ENCODE measurements at regions of chr6 and their contacts with region 1.

Region 1: GRCh38 chr6:109382576-109383437 is 540 bp upstream of the CD164 start:
- DNase-seq: peak; percentile 93 to 96
- H3K4me3 ChIP-seq: peak overlapping the region; percentile 84 to 95
- H3K27ac ChIP-seq: peak overlapping the region; percentile 98 to 100
- H3K4me1 ChIP-seq: peaks cover 0 to 36% (median 16%) of the 10 kb centered on the region in 4 donors
- H3K27me3 ChIP-seq: no peaks in the 10 kb centered on the region
- CTCF ChIP-seq: peak; percentile 43 to 62

Region 2: GRCh38 chr6:109009236-109009961 is 373.4 kb before region 1 on chr6:
- intact Hi-C with region 1: loop called (anchors 5 kb)
- DNase-seq: peak; percentile 96
- H3K4me3 ChIP-seq: peak overlapping the region; percentile 65 to 87
- H3K27ac ChIP-seq: peak overlapping the region; percentile 81 to 86
- H3K4me1 ChIP-seq: peaks cover 0 to 48% (median 19%) of the 10 kb centered on the region in 4 donors
- H3K27me3 ChIP-seq: no peaks in the 10 kb centered on the region
- CTCF ChIP-seq: peak; percentile 41 to 66

Region 3: DNA sequence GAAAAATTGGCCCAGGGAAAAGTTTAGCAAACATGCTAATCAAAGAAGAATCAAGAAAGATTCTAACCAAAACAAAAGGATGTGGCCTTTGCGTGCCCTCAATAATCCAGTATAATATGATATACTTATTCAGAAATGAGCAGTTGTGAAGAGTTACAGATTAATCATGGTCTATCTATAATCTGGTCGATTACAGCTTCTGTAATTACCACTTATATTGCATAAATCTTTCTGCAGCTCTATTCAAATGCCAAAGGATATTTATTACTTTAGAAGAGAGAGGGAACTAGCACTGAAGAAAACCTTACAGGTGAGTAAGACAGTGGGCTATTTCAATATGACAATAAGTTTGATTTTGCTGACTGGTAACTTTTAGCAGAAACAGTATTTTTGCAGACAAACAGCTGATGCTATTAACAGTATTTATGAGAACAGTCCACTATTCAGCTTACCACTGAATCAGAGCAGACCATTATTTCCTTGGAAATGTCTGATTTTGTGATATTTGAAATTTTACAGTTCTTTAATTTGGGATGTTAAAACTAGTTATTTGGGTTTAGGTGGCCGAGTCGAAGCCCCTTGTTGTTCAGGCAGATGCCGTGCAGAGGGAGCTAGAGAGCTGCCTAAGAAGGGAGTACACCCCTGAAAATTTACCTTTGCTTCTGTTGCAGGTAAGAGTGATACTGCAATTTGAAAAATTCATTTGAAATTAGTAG is 195.2 kb before region 1 on chr6:
- intact Hi-C with region 1: loop called (anchors 2 kb)
- DNase-seq: peak in 1 of 2 donors; percentile 35
- H3K4me3 ChIP-seq: no peak overlapping the region
- H3K27ac ChIP-seq: no peak overlapping the region
- H3K4me1 ChIP-seq: peaks cover 0 to 3% (median 1%) of the 10 kb centered on the region in 4 donors
- H3K27me3 ChIP-seq: no peaks in the 10 kb centered on the region
- CTCF ChIP-seq: peak; percentile 91 to 95

Region 4: GRCh38 chr6:109440331-109441068 is 57.7 kb after region 1 on chr6 and contains the starts of genes PPIL6 and SMPD2:
- intact Hi-C with region 1: loop called (anchors 2 kb)
- DNase-seq: peak; percentile 88 to 94
- H3K4me3 ChIP-seq: peak within 1 kb of the TSS; percentile 85 to 86
- H3K27ac ChIP-seq: peak within 1 kb of the TSS; percentile 81 to 89
- H3K4me1 ChIP-seq: peaks cover 0 to 22% (median 13%) of the 10 kb centered on the region in 4 donors
- H3K27me3 ChIP-seq: no peaks in the 10 kb centered on the region
- CTCF ChIP-seq: peak in 1 of 2 experiments; percentile 23

Region 5: GRCh38 chr6:109740787-109741186 is 358.0 kb after region 1 on chr6:
- intact Hi-C with region 1: no loop called
- DNase-seq: no peak
- H3K4me3 ChIP-seq: no peak overlapping the region
- H3K27ac ChIP-seq: no peak overlapping the region
- H3K4me1 ChIP-seq: no peaks in the 10 kb centered on the region
- H3K27me3 ChIP-seq: no peaks in the 10 kb centered on the region
- CTCF ChIP-seq: no peak

Measured in tibial artery (tissue), 4 donors.